Uterus (tissue), 4 donors: ENCODE measurements at regions of chr3 and their contacts with region 1.

Region 1: DNA sequence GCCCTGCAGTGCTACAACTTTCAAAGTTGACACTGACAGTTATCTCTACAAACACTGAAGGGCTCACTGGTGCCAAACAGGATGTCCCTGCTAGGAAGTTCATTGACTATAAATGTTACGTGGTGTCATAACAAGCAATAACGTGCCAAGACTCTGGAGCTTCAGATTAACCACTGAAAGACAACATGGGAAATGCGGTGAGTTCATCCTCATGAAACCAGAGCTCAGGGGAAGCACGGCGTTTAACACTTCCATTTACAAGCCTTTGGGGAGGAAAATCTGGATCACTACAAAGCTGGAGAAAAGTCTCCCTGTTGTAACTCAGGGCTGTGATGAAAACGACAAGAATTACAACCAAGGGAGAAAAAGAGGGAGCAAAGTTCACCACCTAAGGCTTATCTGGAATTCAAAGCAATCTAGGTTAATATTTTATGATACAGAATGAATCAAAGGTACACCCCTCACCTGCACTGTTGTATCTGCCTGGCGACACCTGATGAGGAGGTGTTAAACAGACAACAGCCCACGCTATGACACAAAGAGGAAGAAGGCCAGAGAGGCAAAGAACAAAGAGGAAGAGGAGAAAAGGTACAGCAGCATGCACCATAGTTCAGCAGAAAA is 27.0 kb downstream of the SHQ1 start:
- DNase-seq: peak in 1 of 2 donors; percentile 16
- H3K4me3 ChIP-seq: no peak overlapping the region
- H3K27ac ChIP-seq: no peak overlapping the region
- H3K4me1 ChIP-seq: peaks cover 0 to 9% of the 10 kb centered on the region in 2 donors
- H3K27me3 ChIP-seq: no peaks in the 10 kb centered on the region
- CTCF ChIP-seq: no peak
- POLR2A ChIP-seq: no peak

Region 2: GRCh38 chr3:71875461-71875947 is 945.8 kb before region 1 on chr3:
- intact Hi-C with region 1: loop called (anchors 10 kb)
- DNase-seq: peak; percentile 62 to 75
- H3K4me3 ChIP-seq: no peak overlapping the region
- H3K27ac ChIP-seq: no peak overlapping the region
- H3K4me1 ChIP-seq: no peaks in the 10 kb centered on the region
- H3K27me3 ChIP-seq: no peaks in the 10 kb centered on the region
- CTCF ChIP-seq: peak; percentile 73 to 84 (median 78)
- POLR2A ChIP-seq: no peak

Region 3: DNA sequence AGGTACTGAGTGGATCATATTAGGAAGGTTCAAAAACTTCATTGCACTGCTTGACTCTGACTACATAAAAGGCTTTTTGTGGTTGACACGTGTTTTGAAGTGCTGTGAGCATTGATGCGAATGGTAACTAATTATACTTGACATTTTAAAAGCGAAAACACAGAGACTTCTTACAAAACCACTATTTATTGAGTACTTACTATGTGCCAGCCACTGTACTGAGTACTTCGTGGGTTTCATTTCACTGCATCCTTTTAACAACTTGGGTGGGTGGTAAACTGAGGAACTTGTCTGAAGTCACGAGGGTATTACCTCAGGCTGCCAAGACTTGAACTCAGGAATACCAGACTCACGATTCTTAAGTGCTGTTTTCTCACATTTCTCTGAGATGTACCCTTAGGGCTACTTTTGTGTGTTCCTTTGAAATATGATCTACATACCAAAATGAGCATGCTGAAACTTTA is 130.0 kb after region 1 on chr3:
- intact Hi-C with region 1: no loop called
- DNase-seq: no peak
- H3K4me3 ChIP-seq: no peak overlapping the region
- H3K27ac ChIP-seq: no peak overlapping the region
- H3K4me1 ChIP-seq: no peaks in the 10 kb centered on the region
- H3K27me3 ChIP-seq: no peaks in the 10 kb centered on the region
- CTCF ChIP-seq: no peak
- POLR2A ChIP-seq: no peak